H1 (cell line): ENCODE measurements at regions of chr7 and their contacts with region 1.

Region 1: GRCh38 chr7:132614428-132615318 is 38.4 kb upstream of the PLXNA4 start:
- DNase-seq: peak; percentile 34 to 67
- H3K4me3 ChIP-seq: peak overlapping the region; percentile 31 to 60 (median 57)
- H3K27ac ChIP-seq: no peak overlapping the region
- H3K4me1 ChIP-seq: peaks cover 2 to 13% (median 4%) of the 10 kb centered on the region in 4 experiments; a peak in 5 of 7 replicates
- H3K27me3 ChIP-seq: peaks cover 0 to 13% (median 5%) of the 10 kb centered on the region in 4 experiments; a peak in 3 of 7 replicates
- CTCF ChIP-seq: peak; percentile 19 to 51 (median 43)
- EP300 ChIP-seq: no peak
- POLR2A ChIP-seq: no peak; a peak in 1 of 3 replicates
- RAD21 ChIP-seq: peak; percentile 32 to 33; a peak in 3 of 4 replicates

Region 2: GRCh38 chr7:132603220-132603833 is 11.3 kb before region 1 on chr7:
- CTCF ChIA-PET with region 1: interaction called, 10 read pairs
- POLR2A ChIA-PET with region 1: no interaction called
- DNase-seq: no peak
- H3K4me3 ChIP-seq: no peak overlapping the region
- H3K27ac ChIP-seq: no peak overlapping the region
- H3K4me1 ChIP-seq: no peaks in the 10 kb centered on the region; a peak in 1 of 7 replicates
- H3K27me3 ChIP-seq: no peaks in the 10 kb centered on the region
- CTCF ChIP-seq: no peak
- EP300 ChIP-seq: no peak
- POLR2A ChIP-seq: no peak
- RAD21 ChIP-seq: no peak

Region 3: GRCh38 chr7:132687981-132688383 is 73.3 kb after region 1 on chr7:
- CTCF ChIA-PET with region 1: no interaction called
- POLR2A ChIA-PET with region 1: no interaction called
- DNase-seq: peak; percentile 39 to 49
- H3K4me3 ChIP-seq: peak overlapping the region in 1 of 4 experiments; percentile 21; a peak in 1 of 8 replicates
- H3K27ac ChIP-seq: peak overlapping the region; percentile 17; the same call in 1 of the 2 replicates
- H3K4me1 ChIP-seq: peaks cover 3 to 19% (median 10%) of the 10 kb centered on the region in 4 experiments; a peak in 5 of 7 replicates
- H3K27me3 ChIP-seq: no peaks in the 10 kb centered on the region
- CTCF ChIP-seq: no peak
- EP300 ChIP-seq: 0 out of 3 replicates have a peak, but pooled peaks of 1 of the 2 experiments have one; percentile 4
- POLR2A ChIP-seq: no peak
- RAD21 ChIP-seq: no peak